ENCODE measurements at regions of chr21 and their contacts with region 1.

Region 1: DNA sequence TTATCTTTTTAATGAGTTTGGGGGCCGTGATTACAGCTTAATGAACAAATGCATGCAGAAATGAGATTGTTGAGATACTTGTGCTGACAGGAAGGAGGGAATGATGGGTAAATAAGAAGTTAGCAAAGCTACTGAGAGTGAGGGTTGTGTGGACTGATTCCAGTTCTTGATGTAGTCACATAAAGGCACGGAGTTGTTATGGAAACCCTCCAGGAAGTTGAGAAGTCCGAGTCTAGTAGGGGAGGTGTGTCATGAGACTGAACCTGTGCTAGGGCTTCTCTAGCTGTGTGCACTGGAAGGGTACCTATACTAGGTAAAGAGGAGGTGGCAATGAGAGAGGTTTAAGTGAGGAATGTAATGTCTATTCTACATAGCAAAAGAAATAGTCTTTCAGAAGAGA is 475.7 kb downstream of the USP25 start:
- DNase-seq: no peak
- H3K4me3 ChIP-seq: no peak overlapping the region
- H3K27ac ChIP-seq: no peak overlapping the region
- H3K4me1 ChIP-seq: peaks cover 2% of the 10 kb centered on the region
- H3K27me3 ChIP-seq: no peaks in the 10 kb centered on the region
- CTCF ChIP-seq: no peak
- EP300 ChIP-seq: no peak
- POLR2A ChIP-seq: no peak

Region 2: DNA sequence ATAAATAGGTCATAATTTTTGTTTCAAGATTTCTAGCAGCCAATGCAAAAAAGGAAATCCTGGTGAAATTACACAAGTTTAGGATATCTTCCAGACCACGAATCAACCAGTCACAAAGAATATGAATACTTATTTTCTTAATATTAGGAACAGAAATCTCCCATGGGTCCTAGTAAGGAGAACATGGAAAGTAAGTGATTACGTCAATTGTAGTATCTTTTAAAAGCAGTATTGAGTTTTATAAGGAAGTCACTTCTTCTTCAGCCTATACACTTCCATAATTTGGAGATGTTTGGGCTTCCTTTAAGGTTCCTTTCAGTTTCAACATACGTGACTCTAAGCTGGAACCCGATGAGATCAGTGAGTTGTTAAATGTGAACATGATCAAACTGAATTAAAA is 58.8 kb after region 1 on chr21:
- intact Hi-C with region 1: no loop called
- DNase-seq: no peak
- H3K4me3 ChIP-seq: no peak overlapping the region
- H3K27ac ChIP-seq: no peak overlapping the region
- H3K4me1 ChIP-seq: no peaks in the 10 kb centered on the region
- H3K27me3 ChIP-seq: no peaks in the 10 kb centered on the region
- CTCF ChIP-seq: no peak
- EP300 ChIP-seq: no peak
- POLR2A ChIP-seq: no peak

Region 3: DNA sequence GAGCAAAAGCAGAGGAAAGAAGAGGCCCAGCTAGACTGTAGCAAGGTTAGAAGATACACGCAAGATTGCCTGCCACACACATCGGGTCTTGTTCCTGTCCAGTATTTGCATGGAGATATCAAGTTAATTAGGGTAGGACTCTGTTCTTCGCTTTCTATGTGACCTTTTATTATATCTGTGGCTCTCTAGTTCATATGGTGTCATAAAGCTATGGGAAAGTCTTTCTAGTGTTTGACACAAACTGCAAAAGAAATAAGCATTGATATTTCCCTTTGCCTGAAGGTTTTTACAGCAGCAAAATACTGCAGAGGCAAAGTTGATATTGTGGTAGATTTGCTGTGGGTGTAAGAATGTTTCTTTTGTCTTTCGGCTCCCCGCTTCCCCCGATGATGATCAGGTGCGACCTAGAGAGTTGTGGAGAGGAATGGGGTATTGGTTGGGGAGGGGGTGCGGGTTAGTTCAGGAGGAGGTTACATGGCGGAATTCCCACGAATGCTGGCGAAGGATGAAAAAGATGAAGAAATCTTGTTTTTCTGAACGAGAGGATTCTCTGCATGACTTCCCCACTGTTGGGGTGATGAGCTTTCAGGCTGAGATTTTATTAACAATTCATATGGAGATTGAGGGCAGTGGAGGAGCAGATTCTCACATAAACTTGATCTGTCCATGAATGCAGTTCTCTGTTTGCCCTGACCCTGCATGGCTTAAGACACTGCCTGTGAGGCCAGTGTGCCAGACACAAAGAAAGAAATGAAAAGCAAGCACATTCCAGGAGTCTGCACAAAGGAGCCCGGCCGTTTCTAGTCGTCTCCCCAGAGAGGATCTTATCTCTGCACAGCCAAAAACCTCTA is 74.4 kb after region 1 on chr21:
- intact Hi-C with region 1: loop called in 1 of 4 experiments (anchors 10 kb)
- DNase-seq: peak; percentile 53 to 71 (median 59)
- H3K4me3 ChIP-seq: peak overlapping the region; percentile 28
- H3K27ac ChIP-seq: peak overlapping the region; percentile 72 to 82
- H3K4me1 ChIP-seq: peaks cover 4% of the 10 kb centered on the region
- H3K27me3 ChIP-seq: no peaks in the 10 kb centered on the region
- CTCF ChIP-seq: no peak
- EP300 ChIP-seq: no peak
- POLR2A ChIP-seq: no peak

Measured in ovary (tissue), 10 donors.